Endothelial cell of umbilical vein (primary cell): ENCODE measurements at regions of chr16 and their contacts with region 1.

Region 1: DNA sequence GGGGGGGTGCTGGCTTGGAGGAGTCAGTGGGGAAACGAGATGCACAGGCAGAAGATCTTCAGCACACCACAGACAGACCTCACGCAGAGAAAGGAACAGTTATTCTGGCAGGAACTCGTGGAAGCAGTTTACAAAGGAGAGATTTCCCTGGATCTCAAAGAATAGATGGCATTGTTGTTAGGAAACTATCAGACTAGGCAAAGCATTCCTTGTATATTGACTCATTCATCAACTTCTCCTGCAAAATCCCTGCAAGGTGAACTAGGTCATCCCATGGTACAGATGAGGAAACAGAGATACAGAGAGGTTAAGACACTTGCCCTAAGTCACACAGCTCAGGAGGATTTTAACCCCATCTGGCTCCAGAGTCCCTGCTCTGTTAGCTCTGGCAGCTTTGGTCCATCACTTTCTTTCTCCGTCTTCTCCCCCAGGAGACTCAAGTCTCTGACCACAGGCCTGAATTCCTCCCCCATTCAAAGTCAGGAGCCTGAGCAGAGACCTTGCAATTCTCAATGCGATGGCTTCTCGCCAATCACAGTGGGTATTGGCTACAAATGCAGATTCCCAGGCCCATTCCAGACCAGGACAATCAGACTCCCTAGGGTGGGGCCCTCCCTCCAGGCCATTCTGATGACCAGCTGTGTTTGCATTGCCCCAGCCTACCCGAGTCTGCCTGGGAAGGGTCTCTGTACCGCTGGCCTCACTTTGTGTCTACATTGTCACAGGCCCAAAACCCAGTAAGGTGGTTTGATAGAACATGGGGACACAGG is 56.4 kb downstream of the LITAF start:
- DNase-seq: peak; percentile 56
- H3K4me3 ChIP-seq: no peak overlapping the region
- H3K27ac ChIP-seq: no peak overlapping the region
- H3K4me1 ChIP-seq: peaks cover 9% of the 10 kb centered on the region
- H3K27me3 ChIP-seq: peaks cover 3 to 5% of the 10 kb centered on the region in 2 experiments
- CTCF ChIP-seq: no peak
- POLR2A ChIP-seq: no peak

Region 2: DNA sequence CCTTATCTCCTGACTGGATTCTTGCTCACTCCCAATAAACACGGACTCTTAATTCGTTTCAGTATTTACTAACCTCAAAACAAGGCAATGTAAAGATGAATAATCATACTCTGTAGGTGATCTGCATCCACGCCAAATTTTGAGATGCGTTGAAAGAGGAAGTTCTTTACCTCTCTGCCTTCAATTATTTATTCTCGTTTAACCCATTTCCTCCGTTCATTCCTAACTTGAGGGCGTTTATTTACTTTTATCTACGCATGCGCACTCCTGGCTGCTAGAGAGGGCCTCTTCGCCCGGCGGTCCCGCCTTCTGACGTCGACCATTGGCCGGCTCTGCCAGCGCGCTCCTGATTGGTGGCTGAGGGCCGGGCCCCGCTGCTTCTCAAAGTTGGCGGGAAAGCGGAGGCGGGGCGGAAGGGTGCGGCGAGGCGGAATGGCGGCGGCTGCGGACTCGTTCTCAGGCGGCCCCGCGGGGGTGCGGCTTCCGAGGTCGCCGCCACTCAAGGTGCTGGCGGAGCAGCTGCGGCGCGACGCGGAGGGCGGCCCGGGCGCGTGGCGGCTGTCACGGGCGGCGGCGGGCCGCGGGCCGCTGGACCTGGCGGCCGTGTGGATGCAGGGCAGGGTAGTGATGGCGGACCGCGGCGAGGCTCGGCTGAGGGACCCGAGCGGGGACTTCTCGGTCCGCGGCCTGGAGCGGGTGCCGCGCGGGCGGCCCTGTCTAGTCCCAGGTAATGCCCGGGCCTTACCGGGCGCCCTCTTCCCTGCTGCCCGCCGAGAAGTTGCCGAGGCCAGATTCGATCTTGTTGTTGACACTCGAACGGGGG is 185.1 kb before region 1 on chr16 and contains the start of gene RMI2:
- CTCF ChIA-PET with region 1: no interaction called
- POLR2A ChIA-PET with region 1: no interaction called
- dilution Hi-C with region 1: no loop called
- intact Hi-C with region 1: no loop called
- DNase-seq: peak; percentile 95
- H3K4me3 ChIP-seq: peak within 1 kb of the TSS; percentile 47 to 79 (median 50)
- H3K27ac ChIP-seq: peak within 1 kb of the TSS; percentile 51
- H3K4me1 ChIP-seq: peaks cover 5% of the 10 kb centered on the region
- H3K27me3 ChIP-seq: peaks cover 0 to 2% of the 10 kb centered on the region in 2 experiments
- CTCF ChIP-seq: no peak
- POLR2A ChIP-seq: no peak
- total RNA-seq, gene RMI2: 7.7 and 11.1 TPM in 2 replicates

Region 3: GRCh38 chr16:11370084-11370931 is 160.0 kb before region 1 on chr16:
- CTCF ChIA-PET with region 1: no interaction called
- POLR2A ChIA-PET with region 1: no interaction called
- dilution Hi-C with region 1: no loop called
- intact Hi-C with region 1: no loop called
- DNase-seq: no peak
- H3K4me3 ChIP-seq: no peak overlapping the region
- H3K27ac ChIP-seq: no peak overlapping the region
- H3K4me1 ChIP-seq: no peaks in the 10 kb centered on the region
- H3K27me3 ChIP-seq: no peaks in the 10 kb centered on the region
- CTCF ChIP-seq: no peak
- POLR2A ChIP-seq: no peak

Region 4: GRCh38 chr16:11423315-11424117 is 106.8 kb before region 1 on chr16:
- CTCF ChIA-PET with region 1: interaction called, 18 read pairs
- POLR2A ChIA-PET with region 1: no interaction called
- dilution Hi-C with region 1: no loop called
- intact Hi-C with region 1: no loop called
- DNase-seq: no peak
- H3K4me3 ChIP-seq: no peak overlapping the region
- H3K27ac ChIP-seq: no peak overlapping the region
- H3K4me1 ChIP-seq: peaks cover 3% of the 10 kb centered on the region
- H3K27me3 ChIP-seq: no peaks in the 10 kb centered on the region
- CTCF ChIP-seq: no peak
- POLR2A ChIP-seq: no peak

Region 5: GRCh38 chr16:11488304-11488703 is 42.1 kb before region 1 on chr16:
- CTCF ChIA-PET with region 1: no interaction called
- POLR2A ChIA-PET with region 1: no interaction called
- dilution Hi-C with region 1: no loop called
- intact Hi-C with region 1: no loop called
- DNase-seq: no peak
- H3K4me3 ChIP-seq: no peak overlapping the region
- H3K27ac ChIP-seq: no peak overlapping the region
- H3K4me1 ChIP-seq: peaks cover 17% of the 10 kb centered on the region
- H3K27me3 ChIP-seq: no peaks in the 10 kb centered on the region
- CTCF ChIP-seq: no peak
- POLR2A ChIP-seq: no peak

Region 6: DNA sequence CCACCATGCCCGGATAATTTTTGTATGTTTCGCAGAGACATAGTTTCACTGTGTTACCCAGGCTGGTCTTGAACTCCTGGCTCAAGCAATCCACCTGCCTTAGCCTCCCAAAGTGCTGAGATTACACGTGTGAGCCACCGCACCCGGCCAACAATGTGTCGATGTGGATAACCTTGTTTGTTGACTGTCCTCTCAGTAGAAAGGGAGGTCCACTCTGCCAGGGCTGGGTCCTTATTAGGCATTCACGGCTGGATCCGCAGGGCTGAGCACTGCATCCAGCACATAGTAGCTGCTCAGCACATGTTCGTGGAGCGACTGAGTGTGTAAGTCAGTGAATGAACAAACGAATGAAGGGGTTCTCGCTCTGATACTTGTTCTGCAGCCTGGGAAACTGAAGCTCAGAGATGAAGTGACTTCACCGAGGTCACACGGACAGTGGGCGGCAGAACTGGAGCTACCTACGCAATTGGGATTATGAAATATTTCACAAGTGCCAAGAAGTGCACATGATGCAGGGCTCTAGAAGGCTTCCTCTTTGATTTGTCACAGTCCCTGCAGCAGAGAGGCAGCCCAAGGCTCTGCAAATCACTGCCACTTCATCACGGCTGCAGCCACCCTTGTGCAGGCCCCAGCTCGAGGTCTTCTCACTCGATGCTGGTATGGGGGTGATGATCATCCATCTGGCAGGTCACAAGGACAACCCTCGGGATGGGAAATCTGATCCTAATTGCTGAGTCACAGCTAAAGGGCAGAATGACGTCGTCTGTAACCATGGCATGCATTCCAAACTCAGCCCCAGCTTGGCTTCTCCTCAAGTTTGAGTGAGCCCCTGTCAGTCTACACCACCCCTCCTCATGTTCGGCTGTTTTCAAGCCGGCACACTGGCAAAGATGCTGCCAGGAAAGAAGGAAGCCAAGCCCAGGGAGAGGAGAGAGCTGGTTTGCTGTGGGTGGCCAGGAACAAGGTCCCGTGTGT is 109.9 kb after region 1 on chr16:
- CTCF ChIA-PET with region 1: interaction called, 30 read pairs
- POLR2A ChIA-PET with region 1: no interaction called
- dilution Hi-C with region 1: no loop called
- intact Hi-C with region 1: loop called (anchors 1 kb)
- DNase-seq: peak; percentile 18
- H3K4me3 ChIP-seq: no peak overlapping the region
- H3K27ac ChIP-seq: no peak overlapping the region
- H3K4me1 ChIP-seq: peaks cover 3% of the 10 kb centered on the region
- H3K27me3 ChIP-seq: peaks cover 2% of the 10 kb centered on the region in 2 experiments
- CTCF ChIP-seq: no peak
- POLR2A ChIP-seq: no peak

Region 7: DNA sequence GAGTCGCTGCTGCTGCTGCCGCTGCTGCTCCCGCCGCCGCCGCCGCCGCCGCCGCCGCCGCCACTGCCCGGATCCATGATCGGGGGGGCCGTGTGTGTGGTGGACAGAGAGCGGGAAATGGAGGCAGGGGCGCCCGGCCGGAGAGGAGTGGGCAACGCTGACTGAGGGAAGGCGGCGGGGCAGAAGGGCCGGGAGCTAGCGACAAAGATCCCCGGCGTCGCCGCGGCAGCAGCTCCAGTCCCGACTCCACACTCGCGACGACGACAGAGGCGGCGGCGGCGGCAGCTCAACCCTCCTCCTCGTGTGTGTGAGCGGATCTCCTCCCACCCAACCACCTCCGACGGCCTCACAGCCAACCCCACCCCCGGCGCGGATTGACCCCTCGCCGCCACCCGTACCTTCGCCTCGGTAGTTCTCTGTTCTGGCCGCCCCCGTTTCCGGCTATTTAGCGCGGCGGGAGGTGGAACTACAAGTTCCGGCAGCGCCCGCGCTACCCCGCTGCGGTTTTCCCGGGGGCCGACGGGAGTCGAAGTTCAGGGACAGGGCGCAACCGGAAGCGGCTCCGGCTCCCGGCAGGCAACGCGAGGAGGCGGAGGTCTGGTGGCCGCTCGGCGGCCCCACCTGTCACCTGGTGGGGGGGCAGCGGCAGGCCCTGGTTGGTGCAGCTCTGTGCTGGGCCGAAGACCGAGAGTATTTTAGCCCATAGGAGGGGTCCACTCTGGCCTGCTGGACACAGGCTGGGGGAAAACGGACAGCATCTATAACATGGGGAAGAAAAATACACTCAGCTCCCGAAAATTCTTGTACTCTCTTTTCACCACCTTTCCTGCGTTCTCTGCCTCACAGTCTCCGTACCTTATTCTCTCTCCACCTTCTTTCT is 385.5 kb after region 1 on chr16 and contains the start of gene GSPT1:
- CTCF ChIA-PET with region 1: no interaction called
- POLR2A ChIA-PET with region 1: no interaction called
- dilution Hi-C with region 1: no loop called
- intact Hi-C with region 1: no loop called
- DNase-seq: peak; percentile 99
- H3K4me3 ChIP-seq: peak within 1 kb of the TSS; percentile 68 to 96 (median 77)
- H3K27ac ChIP-seq: peak within 1 kb of the TSS; percentile 76
- H3K4me1 ChIP-seq: peaks cover 24% of the 10 kb centered on the region
- H3K27me3 ChIP-seq: peaks cover 0 to 2% of the 10 kb centered on the region in 2 experiments
- CTCF ChIP-seq: peak in 1 of 2 donors; percentile 9
- POLR2A ChIP-seq: peak; percentile 76
- total RNA-seq, gene GSPT1: 137 and 152 TPM in 2 replicates